Heart left ventricle (tissue), 16 donors: ENCODE measurements at regions of chr1 and their contacts with region 1.

Region 1: GRCh38 chr1:235328357-235329138 is at the start of gene GGPS1:
- DNase-seq: peak; percentile 98 to 99 (median 98)
- ATAC-seq: peak; percentile 92 to 96 (median 96)
- H3K4me3 ChIP-seq: peak within 1 kb of the TSS; percentile 75 to 96 (median 92)
- H3K27ac ChIP-seq: peak within 1 kb of the TSS; percentile 91 to 98 (median 96)
- H3K4me1 ChIP-seq: peaks cover 16 to 70% (median 61%) of the 10 kb centered on the region in 12 donors
- H3K27me3 ChIP-seq: no peaks in the 10 kb centered on the region
- CTCF ChIP-seq: peak in 1 of 12 donors; percentile 4
- POLR2A ChIP-seq: peak in 1 of 2 donors; percentile 78
- total RNA-seq, gene GGPS1: 16.4 to 40.2 (median 30.0) TPM

Region 2: DNA sequence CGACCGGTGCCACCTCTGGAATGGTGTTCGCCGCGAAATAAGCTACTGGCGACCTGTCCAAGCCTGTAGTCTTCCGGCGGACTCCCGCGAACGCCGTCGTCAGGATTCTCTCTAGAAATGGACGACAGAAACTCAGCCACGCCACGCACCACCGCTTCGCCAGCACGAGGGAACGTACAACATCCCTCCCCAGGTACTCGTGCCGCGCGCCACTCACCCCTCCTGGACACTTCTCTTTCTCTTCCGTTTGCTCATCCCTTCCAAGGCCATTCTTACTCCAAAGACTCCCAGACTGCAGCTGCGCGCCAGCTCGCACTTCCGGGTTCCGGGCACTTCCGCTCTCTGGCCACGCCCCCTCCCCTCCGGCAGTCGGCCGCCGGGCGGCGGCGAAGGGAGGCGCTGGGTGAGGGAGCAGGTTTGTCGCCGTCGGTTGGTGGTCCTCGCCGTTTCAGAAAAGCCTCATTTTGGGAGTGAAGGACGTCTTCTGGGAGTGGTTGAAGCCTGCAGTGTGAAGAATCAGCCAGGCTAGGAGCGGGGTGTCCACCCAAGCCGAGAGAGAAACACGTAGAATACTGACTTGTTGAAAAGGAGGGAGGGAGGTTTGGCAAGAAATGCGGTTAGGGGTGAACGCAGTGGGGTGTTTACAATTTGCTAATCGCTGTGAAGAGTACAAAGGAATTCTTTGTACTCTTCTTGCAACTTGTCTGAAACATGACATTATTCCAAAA is 167.4 kb before region 1 on chr1 and contains the start of gene RBM34:
- intact Hi-C with region 1: loop called in 1 of 10 experiments (anchors 5 kb)
- DNase-seq: peak; percentile 92 to 96 (median 93)
- ATAC-seq: peak; percentile 98 to 99 (median 98)
- H3K4me3 ChIP-seq: peak within 1 kb of the TSS; percentile 59 to 90 (median 72)
- H3K27ac ChIP-seq: peak within 1 kb of the TSS; percentile 60 to 92 (median 84)
- H3K4me1 ChIP-seq: peaks cover 0 to 28% (median 16%) of the 10 kb centered on the region in 12 donors
- H3K27me3 ChIP-seq: no peaks in the 10 kb centered on the region
- CTCF ChIP-seq: peak in 8 of 12 donors; percentile 13 to 42 (median 28)
- POLR2A ChIP-seq: peak; percentile 90 to 98
- total RNA-seq, gene RBM34: 34.2 to 75.1 (median 48.6) TPM

Region 3: DNA sequence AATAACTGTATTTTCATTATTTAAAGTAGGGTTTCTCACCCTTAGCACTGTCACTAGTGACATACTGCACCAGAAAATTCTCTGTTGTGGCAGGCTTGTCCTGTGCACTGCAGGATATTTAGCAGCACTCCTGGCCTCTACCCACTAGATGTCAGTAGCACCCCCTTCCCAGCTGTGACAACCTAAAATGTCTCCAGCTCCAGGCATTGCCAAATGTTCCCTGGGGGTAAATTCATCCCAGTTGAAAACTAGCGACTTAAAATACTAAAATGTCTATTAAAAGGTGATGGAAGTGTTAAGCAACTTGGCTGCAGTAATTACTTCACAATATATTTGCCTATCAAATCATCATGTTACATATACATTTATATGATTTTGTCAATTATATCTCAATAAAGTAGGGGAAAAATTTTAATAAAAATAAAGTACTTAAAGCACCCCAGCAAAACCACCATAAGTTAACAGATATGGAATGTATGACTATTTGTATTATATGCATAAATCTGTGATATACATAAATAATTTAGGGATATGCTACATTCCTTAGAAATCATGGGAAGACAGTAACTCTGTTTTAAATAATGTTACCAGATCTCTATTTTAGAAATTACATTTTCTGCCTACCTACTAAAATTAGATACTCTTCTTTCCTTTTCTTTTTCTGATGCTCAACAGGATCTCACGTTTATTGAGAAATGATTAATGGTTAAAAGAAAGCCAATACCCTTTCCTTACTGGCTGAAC is 75.2 kb before region 1 on chr1:
- intact Hi-C with region 1: loop called (anchors 2 to 10 kb)
- DNase-seq: peak in 4 of 5 donors; percentile 45 to 61 (median 50)
- ATAC-seq: peak; percentile 78 to 95 (median 93)
- H3K4me3 ChIP-seq: no peak overlapping the region
- H3K27ac ChIP-seq: no peak overlapping the region
- H3K4me1 ChIP-seq: peaks cover 0 to 13% (median 2%) of the 10 kb centered on the region in 12 donors
- H3K27me3 ChIP-seq: no peaks in the 10 kb centered on the region
- CTCF ChIP-seq: peak; percentile 70 to 93 (median 88)
- POLR2A ChIP-seq: no peak

Region 4: DNA sequence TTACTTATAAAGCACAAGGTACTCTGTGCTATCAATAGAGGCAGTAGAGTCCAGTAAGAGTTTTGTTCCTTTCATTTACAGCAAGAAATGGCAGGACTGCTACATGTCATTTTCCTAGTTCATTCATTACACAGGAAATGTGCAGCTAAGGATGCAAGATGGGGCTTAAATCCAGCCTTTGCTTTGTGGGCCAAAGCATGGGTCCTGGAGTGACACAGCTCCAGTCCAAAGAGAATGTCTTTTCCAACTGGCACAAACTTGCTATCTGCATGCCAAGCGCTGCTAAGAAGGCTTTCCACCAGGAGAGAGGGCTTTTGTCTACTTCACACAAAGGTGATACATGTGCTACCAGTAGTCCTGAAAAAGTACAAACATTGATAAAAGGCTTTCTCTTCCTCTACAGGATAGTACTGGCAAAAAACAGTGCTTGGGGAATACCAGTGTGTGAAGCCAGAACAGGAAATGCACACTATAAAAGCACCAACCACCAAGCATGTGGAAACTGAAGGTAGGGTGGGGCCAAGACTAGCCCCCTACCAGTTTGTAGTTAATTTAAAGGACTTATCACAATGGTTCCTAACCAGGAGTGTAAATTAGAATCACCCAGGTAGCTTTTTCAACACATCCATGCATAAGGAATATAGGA is 69.3 kb before region 1 on chr1:
- intact Hi-C with region 1: loop called in 8 of 10 experiments (anchors 5 to 10 kb)
- DNase-seq: no peak
- ATAC-seq: peak in 3 of 4 donors; percentile 41 to 70 (median 45)
- H3K4me3 ChIP-seq: no peak overlapping the region
- H3K27ac ChIP-seq: no peak overlapping the region
- H3K4me1 ChIP-seq: peaks cover 0 to 37% (median 10%) of the 10 kb centered on the region in 12 donors
- H3K27me3 ChIP-seq: no peaks in the 10 kb centered on the region
- CTCF ChIP-seq: no peak
- POLR2A ChIP-seq: no peak

Region 5: DNA sequence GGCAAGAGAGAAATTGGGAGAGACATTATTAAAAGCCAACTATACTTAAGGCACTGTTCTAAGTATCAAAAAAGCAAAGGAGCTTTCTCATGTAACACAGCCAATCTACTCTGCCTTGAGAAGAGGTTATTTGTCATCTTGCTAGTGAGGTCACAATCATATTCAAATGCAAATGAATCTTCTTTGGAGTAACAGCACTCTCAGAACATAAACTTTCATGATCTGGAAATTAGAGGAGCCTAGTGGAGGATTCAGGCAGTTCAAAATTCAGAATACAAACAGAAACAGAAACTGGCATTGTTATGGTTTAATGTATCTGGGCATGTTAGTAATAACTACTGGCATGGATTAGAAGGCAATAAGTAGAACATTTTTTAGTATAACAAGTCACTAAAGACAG is 57.9 kb before region 1 on chr1:
- intact Hi-C with region 1: loop called in 1 of 10 experiments (anchors 5 kb)
- DNase-seq: no peak
- ATAC-seq: peak in 1 of 4 donors; percentile 18
- H3K4me3 ChIP-seq: peak overlapping the region in 1 of 12 donors; percentile 3
- H3K27ac ChIP-seq: peak overlapping the region in 2 of 12 donors; percentile 20 to 21
- H3K4me1 ChIP-seq: peaks cover 0 to 51% (median 24%) of the 10 kb centered on the region in 12 donors
- H3K27me3 ChIP-seq: no peaks in the 10 kb centered on the region
- CTCF ChIP-seq: no peak
- POLR2A ChIP-seq: no peak

Region 6: DNA sequence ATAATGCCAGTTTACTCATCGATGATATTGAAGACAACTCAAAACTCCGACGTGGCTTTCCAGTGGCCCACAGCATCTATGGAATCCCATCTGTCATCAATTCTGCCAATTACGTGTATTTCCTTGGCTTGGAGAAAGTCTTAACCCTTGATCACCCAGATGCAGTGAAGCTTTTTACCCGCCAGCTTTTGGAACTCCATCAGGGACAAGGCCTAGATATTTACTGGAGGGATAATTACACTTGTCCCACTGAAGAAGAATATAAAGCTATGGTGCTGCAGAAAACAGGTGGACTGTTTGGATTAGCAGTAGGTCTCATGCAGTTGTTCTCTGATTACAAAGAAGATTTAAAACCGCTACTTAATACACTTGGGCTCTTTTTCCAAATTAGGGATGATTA is 13.5 kb after region 1 on chr1:
- intact Hi-C with region 1: no loop called
- DNase-seq: no peak
- ATAC-seq: no peak
- H3K4me3 ChIP-seq: no peak overlapping the region
- H3K27ac ChIP-seq: no peak overlapping the region
- H3K4me1 ChIP-seq: peaks cover 0 to 18% (median 6%) of the 10 kb centered on the region in 12 donors
- H3K27me3 ChIP-seq: no peaks in the 10 kb centered on the region
- CTCF ChIP-seq: no peak
- POLR2A ChIP-seq: no peak

Region 7: GRCh38 chr1:235367000-235367908 is 38.7 kb after region 1 on chr1 and contains the start of gene TBCE:
- intact Hi-C with region 1: loop called in 8 of 10 experiments (anchors 1 to 5 kb)
- DNase-seq: peak; percentile 96 to 98 (median 97)
- ATAC-seq: peak; percentile 100
- H3K4me3 ChIP-seq: peak within 1 kb of the TSS; percentile 45 to 93 (median 75)
- H3K27ac ChIP-seq: peak within 1 kb of the TSS; percentile 53 to 91 (median 80)
- H3K4me1 ChIP-seq: peaks cover 0 to 18% (median 6%) of the 10 kb centered on the region in 12 donors
- H3K27me3 ChIP-seq: no peaks in the 10 kb centered on the region
- CTCF ChIP-seq: peak in 3 of 12 donors; percentile 6 to 27 (median 10)
- POLR2A ChIP-seq: peak in 1 of 2 donors; percentile 89
- total RNA-seq, gene TBCE: 15.2 to 23.2 (median 18.0) TPM

Region 8: GRCh38 chr1:235504496-235505222 is 176.1 kb after region 1 on chr1:
- intact Hi-C with region 1: loop called in 1 of 10 experiments (anchors 5 kb)
- DNase-seq: peak; percentile 99 to 100 (median 99)
- ATAC-seq: peak; percentile 94 to 96 (median 94)
- H3K4me3 ChIP-seq: peak overlapping the region; percentile 58 to 96 (median 83)
- H3K27ac ChIP-seq: peak overlapping the region; percentile 92 to 99 (median 98)
- H3K4me1 ChIP-seq: peaks cover 0 to 32% (median 16%) of the 10 kb centered on the region in 12 donors
- H3K27me3 ChIP-seq: no peaks in the 10 kb centered on the region
- CTCF ChIP-seq: peak; percentile 80 to 100 (median 92)
- POLR2A ChIP-seq: peak; percentile 6 to 61